PC-3 (cell line): ENCODE measurements at regions of chr12 and their contacts with region 1.

Region 1: DNA sequence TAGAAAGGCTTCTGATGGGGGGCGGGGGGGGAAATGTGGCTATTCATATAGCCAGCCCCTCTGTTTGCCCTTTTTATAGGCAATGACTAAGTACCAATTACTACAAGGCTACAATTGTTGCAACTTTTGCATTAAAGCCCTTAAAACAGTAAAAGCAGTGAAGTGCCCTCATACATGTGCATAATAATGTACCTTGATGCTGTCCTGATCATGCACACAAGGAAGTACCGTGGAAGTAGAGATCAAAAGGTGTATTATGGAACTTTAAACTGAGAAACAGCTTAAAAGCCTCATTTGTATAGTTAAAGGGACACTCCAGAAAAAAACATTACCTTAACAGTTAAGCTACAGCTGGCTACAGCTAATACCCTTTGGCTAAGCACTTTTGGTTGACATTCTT is 111.8 kb downstream of the PLEKHG7 start:
- DNase-seq: peak; percentile 15
- ATAC-seq: peak; percentile 92
- H3K4me3 ChIP-seq: no peak overlapping the region
- H3K27ac ChIP-seq: no peak overlapping the region
- H3K4me1 ChIP-seq: no peaks in the 10 kb centered on the region
- H3K27me3 ChIP-seq: no peaks in the 10 kb centered on the region
- CTCF ChIP-seq: no peak

Region 2: DNA sequence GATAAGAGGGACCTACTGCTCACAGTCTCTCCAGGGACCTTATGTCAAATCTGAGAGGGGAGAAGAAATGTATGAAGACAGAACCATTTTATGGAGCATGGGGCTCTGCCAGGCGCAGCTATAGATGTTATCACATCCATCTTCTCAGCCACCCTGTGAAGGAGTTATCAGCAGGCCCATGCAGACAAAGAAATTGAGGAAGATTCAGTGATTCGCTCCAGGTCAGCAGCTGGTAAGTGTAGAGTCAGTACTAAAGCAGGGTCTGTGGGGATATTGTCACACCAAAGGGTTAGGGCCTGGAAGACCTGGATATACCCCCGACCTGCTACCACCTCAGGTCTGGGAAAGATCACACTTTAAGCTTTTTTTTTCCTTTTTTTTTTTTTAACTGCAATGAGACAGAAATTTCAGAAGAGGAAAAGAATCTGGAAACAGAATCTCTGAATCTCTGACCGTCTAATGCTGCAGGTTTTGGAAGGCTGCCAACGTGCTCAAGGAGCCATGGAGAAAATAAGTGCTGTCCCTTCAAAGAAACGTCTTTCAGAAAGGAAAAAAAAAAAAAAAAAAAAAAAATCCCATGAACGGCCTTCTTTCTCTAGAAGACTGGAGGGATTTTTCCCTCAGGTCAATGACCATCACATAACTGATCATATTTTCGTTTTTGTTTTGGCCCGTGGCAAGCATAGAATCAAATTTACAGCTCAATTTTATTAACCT is 185.1 kb before region 1 on chr12:
- CTCF ChIA-PET with region 1: no interaction called
- POLR2A ChIA-PET with region 1: no interaction called
- intact Hi-C with region 1: no loop called
- DNase-seq: no peak
- ATAC-seq: no peak
- H3K4me3 ChIP-seq: no peak overlapping the region
- H3K27ac ChIP-seq: no peak overlapping the region
- H3K4me1 ChIP-seq: peaks cover 6% of the 10 kb centered on the region
- H3K27me3 ChIP-seq: no peaks in the 10 kb centered on the region
- CTCF ChIP-seq: no peak

Region 3: DNA sequence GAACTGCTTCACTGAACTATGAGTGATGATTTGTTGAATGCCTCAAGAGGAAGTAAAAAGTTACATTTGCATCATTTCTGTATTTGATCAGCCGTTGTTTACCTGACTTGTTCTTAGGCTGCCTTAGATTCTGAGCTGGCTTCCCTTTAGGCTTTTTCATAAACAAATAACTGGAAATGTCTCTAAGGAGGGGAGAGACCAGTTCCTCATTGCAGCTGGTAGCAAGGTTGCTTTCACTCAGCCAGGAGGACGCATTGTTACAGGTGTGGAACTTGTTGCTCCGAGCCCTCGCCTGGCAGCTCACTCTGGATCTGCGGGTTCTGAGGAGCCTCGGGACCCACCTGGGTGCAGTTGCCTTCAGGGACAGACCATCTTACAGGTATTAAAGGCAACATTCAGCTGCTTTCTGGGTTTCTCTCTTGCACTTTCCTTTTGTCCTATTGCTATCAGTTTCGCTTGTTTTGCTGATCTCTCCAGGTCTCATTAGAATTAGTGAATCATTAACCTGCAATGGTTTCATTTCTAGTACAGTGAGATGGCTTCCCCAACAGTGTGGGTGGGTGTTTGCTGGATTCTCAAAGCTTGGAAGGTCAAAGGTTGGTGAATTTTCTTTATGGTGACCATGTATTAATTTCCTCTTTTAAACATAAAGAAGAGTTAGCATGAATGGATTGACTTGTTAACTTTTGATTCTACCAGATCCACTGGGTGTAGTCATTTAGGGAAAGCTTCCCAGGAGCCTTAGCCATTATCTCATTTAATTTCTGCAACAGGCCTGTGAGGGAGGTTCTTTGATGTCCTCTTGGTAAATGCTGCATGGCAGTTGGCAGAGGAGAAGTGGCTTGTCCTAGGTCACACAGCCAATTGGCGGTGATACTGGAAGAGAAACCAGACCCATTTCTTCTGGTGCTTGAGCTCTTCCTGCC is 111.6 kb before region 1 on chr12 and contains the start of gene PLEKHG7:
- CTCF ChIA-PET with region 1: no interaction called
- POLR2A ChIA-PET with region 1: no interaction called
- intact Hi-C with region 1: no loop called
- DNase-seq: no peak
- ATAC-seq: no peak
- H3K4me3 ChIP-seq: peak within 1 kb of the TSS; percentile 20; the same call in 1 of the 2 replicates
- H3K27ac ChIP-seq: no peak within 1 kb of the TSS
- H3K4me1 ChIP-seq: no peaks in the 10 kb centered on the region
- H3K27me3 ChIP-seq: no peaks in the 10 kb centered on the region
- CTCF ChIP-seq: no peak
- total RNA-seq, gene PLEKHG7: not detected in 2 replicates

Region 4: GRCh38 chr12:93050026-93050747 is 235.6 kb after region 1 on chr12:
- CTCF ChIA-PET with region 1: no interaction called
- POLR2A ChIA-PET with region 1: no interaction called
- intact Hi-C with region 1: no loop called
- DNase-seq: peak; percentile 40
- ATAC-seq: peak; percentile 49
- H3K4me3 ChIP-seq: no peak overlapping the region
- H3K27ac ChIP-seq: no peak overlapping the region
- H3K4me1 ChIP-seq: peaks cover 8% of the 10 kb centered on the region
- H3K27me3 ChIP-seq: no peaks in the 10 kb centered on the region
- CTCF ChIP-seq: no peak

Region 5: DNA sequence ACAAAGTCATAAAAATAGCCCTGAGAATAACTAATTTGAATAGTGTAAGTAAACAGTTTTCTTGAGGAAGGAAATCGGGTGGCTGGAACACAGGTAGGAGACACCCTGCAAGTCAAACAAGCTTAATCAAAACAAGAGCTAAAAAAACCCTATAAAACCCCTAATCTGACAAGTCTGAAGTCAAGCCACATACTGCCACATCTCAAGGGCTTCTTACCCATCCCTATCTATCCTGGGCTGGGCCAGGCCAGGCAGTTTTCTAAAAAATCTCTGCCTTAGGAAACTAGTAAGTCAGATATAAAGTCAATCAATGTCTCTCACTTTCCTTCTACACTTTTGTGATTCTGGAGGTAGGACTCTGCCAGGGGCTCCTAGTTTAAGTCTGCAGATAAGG is 611.8 kb after region 1 on chr12:
- CTCF ChIA-PET with region 1: no interaction called
- POLR2A ChIA-PET with region 1: interaction called, 12 read pairs
- intact Hi-C with region 1: no loop called
- DNase-seq: no peak
- ATAC-seq: no peak
- H3K4me3 ChIP-seq: no peak overlapping the region
- H3K27ac ChIP-seq: no peak overlapping the region
- H3K4me1 ChIP-seq: peaks cover 7% of the 10 kb centered on the region; the same call in 1 of the 2 replicates
- H3K27me3 ChIP-seq: no peaks in the 10 kb centered on the region
- CTCF ChIP-seq: no peak